Calu3 (cell line): ENCODE measurements at regions of chr2 and their contacts with region 1.

Region 1: DNA sequence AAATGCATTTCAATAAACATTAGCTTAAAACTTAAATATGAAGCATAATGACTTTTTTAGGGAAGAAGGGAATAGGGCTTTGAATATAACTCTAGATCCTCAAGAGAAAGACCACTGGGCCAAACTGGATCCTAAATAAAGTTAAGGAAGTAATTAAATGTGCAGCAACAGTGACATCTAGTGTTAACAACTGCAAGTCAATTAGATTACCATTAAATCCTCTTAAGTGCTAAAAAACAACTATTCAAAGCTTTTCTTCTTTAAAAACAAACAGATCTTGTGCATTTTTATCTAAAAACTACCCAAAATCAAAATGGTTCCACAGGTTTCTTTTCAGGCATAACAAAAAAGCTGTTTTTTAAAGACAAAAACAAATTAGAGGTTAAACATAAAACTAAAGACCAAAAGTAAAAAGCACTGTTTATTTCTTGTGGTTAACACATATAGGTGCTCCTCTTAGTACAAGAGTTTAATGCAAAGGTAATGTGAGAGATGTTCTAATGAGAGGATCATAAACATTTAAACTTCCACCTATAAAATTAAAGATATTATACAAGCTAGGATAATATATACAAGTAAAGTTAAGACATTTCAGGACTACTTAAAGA is 111.4 kb downstream of the THADA start:
- DNase-seq: no peak
- H3K4me3 Mint-ChIP-seq: no peak overlapping the region
- H3K27ac Mint-ChIP-seq: no peak overlapping the region
- H3K4me1 Mint-ChIP-seq: peaks cover 26% of the 10 kb centered on the region
- H3K27me3 Mint-ChIP-seq: no peaks in the 10 kb centered on the region
- CTCF ChIP-seq: no peak

Region 2: DNA sequence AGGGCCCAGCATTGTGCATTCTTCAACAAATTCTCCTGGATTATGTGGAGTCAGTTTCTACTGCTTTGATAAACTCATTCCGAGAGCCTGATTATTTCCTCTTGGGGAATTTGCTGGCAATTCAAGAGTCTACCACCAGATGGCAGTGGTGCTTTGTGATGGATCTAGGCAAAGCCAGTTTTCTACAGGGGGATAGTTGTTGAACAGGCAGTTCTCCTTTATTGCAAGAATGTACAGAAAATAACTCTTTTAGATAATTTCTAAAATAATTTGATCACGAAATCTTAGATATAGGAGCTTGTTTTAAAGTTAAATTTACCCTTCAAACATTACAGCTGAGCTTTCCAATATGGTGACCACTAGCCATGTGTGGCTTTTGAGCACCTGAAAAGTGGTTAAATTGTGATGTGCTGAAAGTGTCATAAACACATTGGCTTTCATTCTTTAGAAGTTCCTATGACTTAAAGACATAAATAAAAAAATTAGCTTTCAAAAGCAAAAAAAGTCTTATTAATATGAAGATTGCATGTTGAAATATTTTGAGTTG is 625.3 kb before region 1 on chr2:
- CTCF ChIA-PET with region 1: no interaction called
- intact Hi-C with region 1: loop called (anchors 10 kb)
- DNase-seq: peak; percentile 84
- H3K4me3 Mint-ChIP-seq: no peak overlapping the region
- H3K27ac Mint-ChIP-seq: no peak overlapping the region
- H3K4me1 Mint-ChIP-seq: peaks cover 8% of the 10 kb centered on the region
- H3K27me3 Mint-ChIP-seq: no peaks in the 10 kb centered on the region
- CTCF ChIP-seq: peak; percentile 82

Region 3: GRCh38 chr2:43131024-43131889 is 353.2 kb before region 1 on chr2:
- CTCF ChIA-PET with region 1: no interaction called
- intact Hi-C with region 1: loop called (anchors 1 kb)
- DNase-seq: peak; percentile 84
- H3K4me3 Mint-ChIP-seq: no peak overlapping the region
- H3K27ac Mint-ChIP-seq: peak overlapping the region; percentile 62
- H3K4me1 Mint-ChIP-seq: peaks cover 44% of the 10 kb centered on the region
- H3K27me3 Mint-ChIP-seq: no peaks in the 10 kb centered on the region
- CTCF ChIP-seq: no peak

Region 4: GRCh38 chr2:43300840-43301583 is 183.4 kb before region 1 on chr2:
- CTCF ChIA-PET with region 1: no interaction called
- intact Hi-C with region 1: loop called (anchors 5 kb)
- DNase-seq: no peak
- H3K4me3 Mint-ChIP-seq: no peak overlapping the region
- H3K27ac Mint-ChIP-seq: no peak overlapping the region
- H3K4me1 Mint-ChIP-seq: peaks cover 23% of the 10 kb centered on the region
- H3K27me3 Mint-ChIP-seq: no peaks in the 10 kb centered on the region
- CTCF ChIP-seq: no peak